Activated CD8-positive, alpha-beta T cell treated with anti-CD3 and anti-CD28 coated beads for 36 hours (primary cell): ENCODE measurements at regions of chr5 and their contacts with region 1.

Region 1: DNA sequence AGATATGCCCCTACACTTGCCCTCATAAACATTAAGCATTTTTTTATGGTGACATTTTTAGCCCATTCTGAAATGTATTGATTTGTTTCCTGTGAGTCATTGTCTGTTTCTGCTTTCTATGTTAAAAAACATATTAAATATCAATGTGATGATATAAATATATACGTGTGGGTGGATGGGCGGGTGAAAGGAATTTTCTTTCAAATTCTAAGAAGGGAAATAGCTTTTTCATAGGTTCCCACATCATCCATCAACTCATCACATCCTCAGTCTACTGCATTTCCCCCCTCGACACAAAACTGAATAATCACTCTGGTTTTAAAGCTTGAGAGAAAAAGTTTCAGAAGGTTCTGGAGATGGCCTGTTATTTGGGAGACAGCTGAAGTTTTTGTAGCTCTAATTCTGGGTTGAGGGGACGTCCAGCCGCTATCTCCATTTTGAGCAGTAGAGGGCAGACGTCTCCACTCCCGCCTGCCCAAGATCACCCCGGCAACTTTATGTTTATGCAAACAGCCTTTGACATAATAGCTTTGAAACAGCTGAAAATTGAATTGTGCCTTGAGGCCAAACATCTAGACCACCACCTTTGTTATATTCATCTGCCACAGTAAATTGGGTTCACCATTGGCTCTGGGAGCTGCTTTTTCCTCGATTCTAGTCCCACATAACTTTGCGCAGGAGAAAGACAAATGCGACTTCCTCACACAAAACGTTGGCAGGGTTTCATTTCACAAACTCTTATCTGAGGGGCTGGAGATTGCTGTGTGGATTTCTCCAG is 216.2 kb upstream of the CLINT1 start:
- DNase-seq: peak; percentile 62
- ATAC-seq: peak; percentile 90
- H3K4me3 Mint-ChIP-seq: no peak overlapping the region
- H3K27ac Mint-ChIP-seq: no peak overlapping the region
- H3K4me1 Mint-ChIP-seq: peaks cover 9% of the 10 kb centered on the region
- H3K27me3 Mint-ChIP-seq: peaks cover 2% of the 10 kb centered on the region
- CTCF ChIP-seq: peak; percentile 65

Region 2: DNA sequence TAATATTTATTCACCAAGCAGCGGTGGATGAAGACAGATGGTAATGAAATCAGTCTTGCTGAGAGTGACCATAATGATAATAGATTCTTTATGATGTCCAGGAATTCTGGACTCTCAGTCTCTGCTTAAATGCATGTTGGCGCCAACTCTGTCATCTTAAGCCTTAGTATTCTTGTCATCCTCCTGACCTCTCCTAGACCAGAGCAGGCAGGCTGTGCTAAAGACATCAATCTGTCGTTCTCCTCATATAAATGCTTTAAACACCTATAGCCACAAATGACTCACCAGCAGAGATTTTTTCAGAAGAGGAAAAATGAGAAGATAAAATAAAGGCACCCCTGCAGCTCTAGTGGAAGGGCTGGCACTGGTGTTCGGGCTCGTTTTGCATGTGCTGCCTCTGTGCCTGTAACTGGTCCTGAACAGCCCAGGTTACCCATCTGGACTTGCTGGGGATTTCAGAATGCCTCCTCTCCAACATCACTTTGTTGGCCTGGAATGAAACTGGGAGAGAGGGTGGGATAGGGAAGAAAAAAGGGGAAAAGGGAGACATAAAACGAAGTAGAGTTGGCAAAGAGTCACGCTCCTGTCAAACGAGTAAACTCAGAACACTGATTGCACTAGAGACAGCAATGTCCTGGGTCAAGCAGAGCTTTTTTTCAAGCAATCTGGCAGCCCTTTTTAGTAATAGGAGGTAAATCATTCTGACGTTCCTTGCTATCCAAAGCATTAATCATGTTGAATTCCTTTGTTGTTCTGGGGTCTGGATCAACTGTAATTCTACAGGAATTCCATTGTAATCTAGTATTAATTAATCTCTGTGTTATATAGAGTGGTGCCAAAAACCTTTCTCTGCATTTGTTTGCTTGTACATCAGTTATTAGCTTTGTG is 20.7 kb before region 1 on chr5:
- CTCF ChIA-PET with region 1: interaction called, 12 read pairs
- POLR2A ChIA-PET with region 1: no interaction called
- intact Hi-C with region 1: no loop called
- DNase-seq: no peak
- ATAC-seq: no peak
- H3K4me3 Mint-ChIP-seq: no peak overlapping the region
- H3K27ac Mint-ChIP-seq: no peak overlapping the region
- H3K4me1 Mint-ChIP-seq: no peaks in the 10 kb centered on the region
- H3K27me3 Mint-ChIP-seq: peaks cover 9% of the 10 kb centered on the region
- CTCF ChIP-seq: no peak

Region 3: GRCh38 chr5:158064334-158065123 is 10.7 kb before region 1 on chr5:
- CTCF ChIA-PET with region 1: interaction called, 53 read pairs
- POLR2A ChIA-PET with region 1: no interaction called
- intact Hi-C with region 1: no loop called
- DNase-seq: no peak
- ATAC-seq: no peak
- H3K4me3 Mint-ChIP-seq: no peak overlapping the region
- H3K27ac Mint-ChIP-seq: no peak overlapping the region
- H3K4me1 Mint-ChIP-seq: no peaks in the 10 kb centered on the region
- H3K27me3 Mint-ChIP-seq: peaks cover under 1% of the 10 kb centered on the region
- CTCF ChIP-seq: no peak

Region 4: DNA sequence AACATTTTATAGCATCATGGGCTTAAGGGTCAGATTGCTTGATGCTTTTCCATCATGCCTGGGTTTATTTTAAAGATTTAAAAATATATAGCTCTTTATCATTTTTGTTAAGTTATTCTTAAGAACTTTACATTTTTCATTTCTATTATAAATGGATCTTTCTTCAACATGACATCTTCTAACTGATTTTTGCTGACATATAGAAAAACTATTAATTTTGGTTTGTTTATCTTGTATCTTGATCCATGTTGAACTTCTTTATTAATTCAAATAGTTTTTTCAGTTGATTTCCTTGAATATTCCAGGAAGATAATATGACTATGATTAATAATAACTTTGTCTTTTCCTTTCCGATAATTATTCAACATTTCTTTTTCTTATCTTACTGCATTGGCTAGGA is 21.7 kb after region 1 on chr5:
- CTCF ChIA-PET with region 1: interaction called, 24 read pairs
- POLR2A ChIA-PET with region 1: no interaction called
- intact Hi-C with region 1: no loop called
- DNase-seq: no peak
- ATAC-seq: no peak
- H3K4me3 Mint-ChIP-seq: no peak overlapping the region
- H3K27ac Mint-ChIP-seq: no peak overlapping the region
- H3K4me1 Mint-ChIP-seq: no peaks in the 10 kb centered on the region
- H3K27me3 Mint-ChIP-seq: peaks cover 13% of the 10 kb centered on the region
- CTCF ChIP-seq: no peak

Region 5: GRCh38 chr5:158142156-158142555 is 67.0 kb after region 1 on chr5:
- CTCF ChIA-PET with region 1: interaction called, 10 read pairs
- POLR2A ChIA-PET with region 1: no interaction called
- intact Hi-C with region 1: no loop called
- DNase-seq: no peak
- ATAC-seq: no peak
- H3K4me3 Mint-ChIP-seq: no peak overlapping the region
- H3K27ac Mint-ChIP-seq: no peak overlapping the region
- H3K4me1 Mint-ChIP-seq: no peaks in the 10 kb centered on the region
- H3K27me3 Mint-ChIP-seq: peaks cover 1% of the 10 kb centered on the region
- CTCF ChIP-seq: no peak

Region 6: GRCh38 chr5:158174918-158175851 is 100.0 kb after region 1 on chr5:
- CTCF ChIA-PET with region 1: interaction called, 11 read pairs
- POLR2A ChIA-PET with region 1: no interaction called
- intact Hi-C with region 1: no loop called
- DNase-seq: peak; percentile 72
- ATAC-seq: peak; percentile 42
- H3K4me3 Mint-ChIP-seq: no peak overlapping the region
- H3K27ac Mint-ChIP-seq: no peak overlapping the region
- H3K4me1 Mint-ChIP-seq: no peaks in the 10 kb centered on the region
- H3K27me3 Mint-ChIP-seq: no peaks in the 10 kb centered on the region
- CTCF ChIP-seq: peak; percentile 76